HepG2 (cell line): ENCODE measurements at regions of chr11 and their contacts with region 1.

Region 1: GRCh38 chr11:76835928-76836612 is 24.6 kb upstream of the ACER3 start:
- DNase-seq: no peak
- ATAC-seq: no peak
- H3K4me3 ChIP-seq: no peak overlapping the region
- H3K27ac ChIP-seq: no peak overlapping the region
- H3K4me1 ChIP-seq: peaks cover 7% of the 10 kb centered on the region; the same call in 1 of the 2 replicates
- H3K27me3 ChIP-seq: peaks cover 3 to 46% of the 10 kb centered on the region in 2 experiments; a peak in 3 of 5 replicates
- CTCF ChIP-seq: no peak
- EP300 ChIP-seq: no peak
- POLR2A ChIP-seq: no peak
- RAD21 ChIP-seq: no peak

Region 2: GRCh38 chr11:76721755-76722677 is 114.1 kb before region 1 on chr11:
- CTCF ChIA-PET with region 1: interaction called, 4 read pairs
- POLR2A ChIA-PET with region 1: no interaction called
- in situ Hi-C with region 1: loop called (anchors 10 kb)
- intact Hi-C with region 1: loop called (anchors 5 kb)
- DNase-seq: peak; percentile 58
- ATAC-seq: peak; percentile 94
- H3K4me3 ChIP-seq: peak overlapping the region in 1 of 3 experiments; percentile 41; a peak in 1 of 6 replicates
- H3K27ac ChIP-seq: no peak overlapping the region
- H3K4me1 ChIP-seq: peaks cover 5% of the 10 kb centered on the region; the same call in 1 of the 2 replicates
- H3K27me3 ChIP-seq: peaks cover 0 to 18% of the 10 kb centered on the region in 2 experiments; a peak in 3 of 5 replicates
- CTCF ChIP-seq: peak; percentile 93
- EP300 ChIP-seq: no peak
- POLR2A ChIP-seq: no peak
- RAD21 ChIP-seq: peak; percentile 65; the same call in 1 of the 2 replicates

Region 3: DNA sequence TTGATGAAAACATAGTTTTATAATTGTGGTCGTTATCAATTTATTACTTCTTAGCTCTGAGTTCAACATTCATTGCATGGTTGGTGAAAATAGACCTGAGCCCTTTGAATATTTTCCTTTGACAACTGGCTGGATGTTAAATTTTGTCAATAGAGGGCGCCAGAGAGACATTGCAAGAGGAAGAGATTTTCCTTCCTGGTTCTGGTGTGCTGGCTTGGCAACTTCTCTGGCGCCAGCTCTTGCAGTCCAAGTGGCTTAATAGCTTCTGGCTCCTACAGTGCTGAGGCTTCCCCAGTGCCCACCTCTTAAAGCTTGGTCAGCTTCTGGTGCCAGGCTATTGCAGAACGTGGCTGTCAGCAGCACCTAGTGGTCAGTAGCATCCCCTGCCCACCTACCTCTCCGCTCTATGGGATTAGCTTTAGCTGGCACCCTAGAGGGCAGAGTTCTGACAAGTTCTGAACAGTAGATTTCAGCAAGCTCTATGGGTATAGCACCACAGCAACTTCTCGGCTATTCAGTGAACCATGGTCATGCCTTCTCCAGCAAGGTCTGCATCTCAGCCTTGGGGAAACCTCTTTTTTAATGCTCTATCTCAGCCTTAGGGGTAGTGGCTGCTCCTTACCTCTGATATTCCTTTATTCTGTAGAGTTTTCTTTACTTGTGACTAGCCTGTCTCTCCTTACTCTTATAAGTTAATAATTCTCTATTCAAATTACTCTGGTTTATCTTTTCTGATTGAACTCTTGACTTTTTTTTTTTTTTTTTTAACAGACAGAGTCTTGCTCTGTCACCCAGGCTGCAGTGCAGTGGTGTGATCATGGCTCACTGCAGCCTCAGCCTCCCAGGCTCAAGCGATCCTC is 84.0 kb after region 1 on chr11:
- CTCF ChIA-PET with region 1: no interaction called
- POLR2A ChIA-PET with region 1: no interaction called
- in situ Hi-C with region 1: no loop called
- intact Hi-C with region 1: no loop called
- DNase-seq: peak; percentile 79
- ATAC-seq: peak; percentile 85
- H3K4me3 ChIP-seq: no peak overlapping the region
- H3K27ac ChIP-seq: no peak overlapping the region
- H3K4me1 ChIP-seq: peaks cover 13% of the 10 kb centered on the region
- H3K27me3 ChIP-seq: no peaks in the 10 kb centered on the region
- CTCF ChIP-seq: peak; percentile 84
- EP300 ChIP-seq: no peak
- POLR2A ChIP-seq: no peak
- RAD21 ChIP-seq: peak; percentile 67